Right ventricle myocardium superior (tissue), 1 donor: ENCODE measurements at regions of chr5 and their contacts with region 1.

Region 1: DNA sequence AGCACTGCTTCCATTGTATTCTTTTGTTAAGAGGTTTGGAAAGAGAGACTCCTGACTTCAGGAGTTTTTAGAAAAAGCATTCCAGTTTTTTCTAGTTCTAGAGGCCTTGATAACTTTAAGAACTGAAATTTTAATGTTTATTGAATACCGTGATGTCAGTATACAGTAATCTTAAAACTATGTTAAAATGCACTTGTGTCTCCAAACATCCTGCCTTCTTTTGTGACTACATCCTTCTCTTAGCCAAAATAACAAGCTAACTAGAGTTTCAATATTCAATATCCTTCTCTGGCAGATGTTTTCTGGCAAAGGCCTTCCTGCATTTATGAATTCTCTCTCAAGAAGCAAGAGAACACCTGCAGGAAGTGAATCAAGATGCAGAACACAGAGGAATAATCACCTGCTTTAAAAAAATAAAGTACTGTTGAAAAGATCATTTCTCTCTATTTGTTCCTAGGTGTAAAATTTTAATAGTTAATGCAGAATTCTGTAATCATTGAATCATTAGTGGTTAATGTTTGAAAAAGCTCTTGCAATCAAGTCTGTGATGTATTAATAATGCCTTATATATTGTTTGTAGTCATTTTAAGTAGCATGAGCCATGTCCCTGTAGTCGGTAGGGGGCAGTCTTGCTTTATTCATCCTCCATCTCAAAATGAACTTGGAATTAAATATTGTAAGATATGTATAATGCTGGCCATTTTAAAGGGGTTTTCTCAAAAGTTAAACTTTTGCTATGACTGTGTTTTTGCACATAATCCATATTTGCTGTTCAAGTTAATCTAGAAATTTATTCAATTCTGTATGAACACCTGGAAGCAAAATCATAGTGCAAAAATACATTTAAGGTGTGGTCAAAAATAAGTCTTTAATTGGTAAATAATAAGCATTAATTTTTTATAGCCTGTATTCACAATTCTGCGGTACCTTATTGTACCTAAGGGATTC is 43.1 kb downstream of the NDFIP1 start:
- DNase-seq: no peak
- ATAC-seq: peak; percentile 77

Region 2: GRCh38 chr5:142108432-142109330 is 43.0 kb before region 1 on chr5 and contains the start of gene NDFIP1:
- intact Hi-C with region 1: no loop called
- DNase-seq: peak; percentile 93
- ATAC-seq: peak; percentile 98
- total RNA-seq, gene NDFIP1: 50.7 TPM

Region 3: GRCh38 chr5:142201471-142201887 is 49.8 kb after region 1 on chr5:
- intact Hi-C with region 1: no loop called
- DNase-seq: no peak
- ATAC-seq: no peak

Region 4: DNA sequence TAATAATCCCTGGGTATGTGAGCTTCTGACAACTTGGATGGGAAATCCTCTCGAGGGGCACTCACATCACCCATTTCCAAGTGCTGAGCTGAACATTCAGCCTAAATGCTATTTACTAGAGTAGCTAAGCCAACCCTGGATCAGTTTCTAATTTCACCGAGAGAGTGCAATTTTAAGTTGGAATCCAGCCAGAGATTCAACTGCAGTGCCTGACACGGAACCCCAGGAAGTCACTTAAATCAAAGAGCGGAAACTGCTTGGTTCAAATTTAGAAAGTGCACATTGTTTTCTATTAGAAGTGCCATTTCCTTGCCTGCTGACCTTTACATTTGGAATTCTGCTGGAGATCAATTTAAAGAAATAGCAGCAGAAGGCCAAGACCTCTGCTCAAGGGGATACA is 164.3 kb after region 1 on chr5:
- intact Hi-C with region 1: loop called (anchors 10 kb)
- DNase-seq: no peak
- ATAC-seq: peak; percentile 47

Region 5: GRCh38 chr5:142699184-142699720 is 547.5 kb after region 1 on chr5:
- intact Hi-C with region 1: loop called (anchors 5 kb)
- DNase-seq: peak; percentile 92
- ATAC-seq: peak; percentile 90